CD14-positive monocyte (primary cell): ENCODE measurements at regions of chr12 and their contacts with region 1.

Region 1: GRCh38 chr12:63838411-63838810 is 6.1 kb upstream of the SRGAP1 start:
- DNase-seq: no peak
- H3K4me3 ChIP-seq: no peak overlapping the region
- H3K4me3 Mint-ChIP-seq: no peak overlapping the region
- H3K27ac ChIP-seq: no peak overlapping the region
- H3K27ac Mint-ChIP-seq: no peak overlapping the region
- H3K4me1 ChIP-seq: peaks cover 4% of the 10 kb centered on the region in 2 donors
- H3K4me1 Mint-ChIP-seq: peaks cover 4% of the 10 kb centered on the region
- H3K27me3 ChIP-seq: peaks cover 2 to 6% of the 10 kb centered on the region in 2 donors
- H3K27me3 Mint-ChIP-seq: peaks cover 15 to 17% (median 15%) of the 10 kb centered on the region in 3 donors
- CTCF ChIP-seq: no peak

Region 2: GRCh38 chr12:63802012-63802608 is 36.3 kb before region 1 on chr12:
- intact Hi-C with region 1: no loop called
- DNase-seq: peak in 2 of 3 donors; percentile 7 to 25
- H3K4me3 ChIP-seq: no peak overlapping the region
- H3K4me3 Mint-ChIP-seq: no peak overlapping the region
- H3K27ac ChIP-seq: no peak overlapping the region
- H3K27ac Mint-ChIP-seq: no peak overlapping the region
- H3K4me1 ChIP-seq: no peaks in the 10 kb centered on the region
- H3K4me1 Mint-ChIP-seq: no peaks in the 10 kb centered on the region
- H3K27me3 ChIP-seq: no peaks in the 10 kb centered on the region
- H3K27me3 Mint-ChIP-seq: no peaks in the 10 kb centered on the region
- CTCF ChIP-seq: peak; percentile 73

Region 3: DNA sequence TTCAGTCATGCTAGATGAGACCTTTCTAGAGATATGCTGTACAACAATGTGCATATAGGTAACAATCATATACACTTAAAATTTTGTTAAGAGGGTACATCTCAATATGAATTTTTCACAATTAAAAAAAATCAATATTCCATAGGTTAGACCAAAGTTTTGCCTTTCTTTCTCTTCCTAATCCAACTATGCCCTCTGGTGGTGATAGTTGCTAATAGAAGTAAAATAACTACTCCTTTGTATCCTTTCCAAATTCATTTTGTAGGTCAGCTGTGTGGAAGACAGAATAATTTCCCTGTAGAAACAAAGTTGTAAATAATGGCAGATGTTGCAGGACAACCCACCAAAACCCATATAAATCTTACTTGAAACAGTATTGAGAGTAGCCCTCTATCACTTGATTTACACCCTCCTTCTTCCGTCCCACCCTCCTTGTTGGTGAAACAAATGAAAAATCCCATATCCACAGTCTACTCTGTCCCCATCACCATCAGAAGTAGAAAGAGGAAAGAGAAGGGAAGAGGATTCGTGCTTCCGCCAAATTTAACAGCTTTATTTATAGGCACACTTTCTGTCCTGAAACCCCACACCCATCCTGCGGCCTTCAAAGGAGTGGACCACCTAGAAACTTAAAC is 417.9 kb after region 1 on chr12:
- intact Hi-C with region 1: loop called (anchors 2 kb)
- DNase-seq: peak; percentile 29 to 62 (median 44)
- H3K4me3 ChIP-seq: no peak overlapping the region
- H3K4me3 Mint-ChIP-seq: no peak overlapping the region
- H3K27ac ChIP-seq: no peak overlapping the region
- H3K27ac Mint-ChIP-seq: no peak overlapping the region
- H3K4me1 ChIP-seq: peaks cover 0 to 2% of the 10 kb centered on the region in 2 donors
- H3K4me1 Mint-ChIP-seq: peaks cover 13% of the 10 kb centered on the region
- H3K27me3 ChIP-seq: no peaks in the 10 kb centered on the region
- H3K27me3 Mint-ChIP-seq: no peaks in the 10 kb centered on the region
- CTCF ChIP-seq: peak; percentile 82